ENCODE measurements at regions of chr13 and their contacts with region 1.

Region 1: DNA sequence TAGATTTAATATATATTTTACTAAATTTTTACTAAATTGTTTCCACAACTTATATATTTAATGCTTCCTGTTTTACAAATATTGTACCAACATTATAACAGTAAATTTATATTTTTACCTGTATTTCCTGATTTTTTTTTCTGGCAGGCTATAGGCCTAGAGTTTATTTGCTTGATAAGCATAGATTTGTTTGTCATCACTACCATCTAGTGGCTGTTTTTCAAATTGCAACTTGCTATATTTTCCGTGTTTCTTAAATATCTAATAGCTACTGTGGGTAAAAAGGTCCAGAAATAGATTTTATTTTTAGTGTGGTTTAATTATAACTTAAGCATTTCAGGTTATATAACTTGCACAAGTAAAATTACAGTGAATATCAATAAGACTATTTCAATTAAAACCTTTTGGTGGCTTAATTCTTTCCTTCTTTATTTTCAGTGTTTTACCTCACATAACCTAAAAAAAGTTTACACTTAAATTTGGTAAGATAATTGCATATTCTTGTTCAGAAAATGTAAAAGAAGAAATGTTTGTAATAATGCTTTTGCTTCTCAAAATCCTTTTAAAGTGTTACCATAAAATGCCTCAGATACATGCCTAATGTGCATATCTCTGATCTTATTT is 60.6 kb downstream of the NDFIP2 start:
- DNase-seq: peak; percentile 30
- ATAC-seq: no peak
- H3K4me3 Mint-ChIP-seq: no peak overlapping the region
- H3K27ac Mint-ChIP-seq: no peak overlapping the region
- H3K4me1 Mint-ChIP-seq: peaks cover 3% of the 10 kb centered on the region
- H3K27me3 Mint-ChIP-seq: no peaks in the 10 kb centered on the region

Region 2: GRCh38 chr13:79336966-79337365 is 204.6 kb before region 1 on chr13:
- CTCF ChIA-PET with region 1: no interaction called
- POLR2A ChIA-PET with region 1: no interaction called
- DNase-seq: no peak
- ATAC-seq: no peak
- H3K4me3 Mint-ChIP-seq: no peak overlapping the region
- H3K27ac Mint-ChIP-seq: no peak overlapping the region
- H3K4me1 Mint-ChIP-seq: no peaks in the 10 kb centered on the region
- H3K27me3 Mint-ChIP-seq: no peaks in the 10 kb centered on the region

Region 3: GRCh38 chr13:79413521-79413920 is 128.0 kb before region 1 on chr13:
- CTCF ChIA-PET with region 1: interaction called, 32 read pairs
- POLR2A ChIA-PET with region 1: no interaction called
- DNase-seq: no peak
- ATAC-seq: no peak
- H3K4me3 Mint-ChIP-seq: no peak overlapping the region
- H3K27ac Mint-ChIP-seq: no peak overlapping the region
- H3K4me1 Mint-ChIP-seq: peaks cover 8% of the 10 kb centered on the region
- H3K27me3 Mint-ChIP-seq: no peaks in the 10 kb centered on the region

Region 4: GRCh38 chr13:79528759-79529191 is 12.8 kb before region 1 on chr13:
- CTCF ChIA-PET with region 1: interaction called, 39 read pairs
- POLR2A ChIA-PET with region 1: no interaction called
- DNase-seq: no peak
- ATAC-seq: no peak
- H3K4me3 Mint-ChIP-seq: no peak overlapping the region
- H3K27ac Mint-ChIP-seq: no peak overlapping the region
- H3K4me1 Mint-ChIP-seq: peaks cover 27% of the 10 kb centered on the region
- H3K27me3 Mint-ChIP-seq: no peaks in the 10 kb centered on the region

Region 5: DNA sequence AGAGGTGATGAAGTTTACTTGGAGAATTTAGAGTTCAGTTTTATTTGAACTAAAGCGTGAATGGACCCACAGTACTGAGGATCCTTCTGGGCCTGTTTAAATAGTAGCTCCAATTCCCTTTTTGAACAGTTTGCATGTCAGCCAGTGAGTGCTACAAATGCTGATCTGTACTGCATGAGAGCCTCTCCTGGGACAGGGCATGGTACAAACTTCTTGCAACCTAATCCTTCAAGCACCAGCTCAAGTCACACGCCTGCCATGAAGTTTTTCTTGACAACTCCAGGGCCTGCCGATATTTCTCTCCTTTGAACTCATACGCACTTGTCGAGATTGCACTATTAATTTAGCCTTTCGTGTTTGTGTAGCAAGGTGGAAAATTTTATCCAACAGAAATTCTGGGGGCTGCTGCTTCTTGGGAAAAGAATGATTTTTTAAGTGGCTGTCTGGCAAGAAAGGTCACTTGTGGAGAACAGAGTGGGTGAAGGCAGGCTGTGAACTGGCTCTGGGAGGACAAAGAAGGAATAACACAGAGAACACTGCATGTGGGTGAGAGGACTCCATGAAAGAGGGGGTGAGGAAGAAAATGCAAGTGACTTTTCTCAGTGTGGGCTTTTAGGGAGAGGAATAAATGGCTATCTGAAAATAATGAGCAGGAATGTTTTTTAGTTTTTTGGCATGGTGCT is 131.9 kb after region 1 on chr13:
- CTCF ChIA-PET with region 1: no interaction called
- POLR2A ChIA-PET with region 1: no interaction called
- DNase-seq: no peak
- ATAC-seq: no peak
- H3K4me3 Mint-ChIP-seq: no peak overlapping the region
- H3K27ac Mint-ChIP-seq: no peak overlapping the region
- H3K4me1 Mint-ChIP-seq: no peaks in the 10 kb centered on the region
- H3K27me3 Mint-ChIP-seq: no peaks in the 10 kb centered on the region

Measured in activated CD8-positive, alpha-beta T cell treated with anti-CD3 and anti-CD28 coated beads, Interleukin-2, amount 10 ng/mL, durations not matched to agents 7 days and 5 days (primary cell).